Left ventricle myocardium superior (tissue), 1 donor: ENCODE measurements at regions of chr3 and their contacts with region 1.

Region 1: DNA sequence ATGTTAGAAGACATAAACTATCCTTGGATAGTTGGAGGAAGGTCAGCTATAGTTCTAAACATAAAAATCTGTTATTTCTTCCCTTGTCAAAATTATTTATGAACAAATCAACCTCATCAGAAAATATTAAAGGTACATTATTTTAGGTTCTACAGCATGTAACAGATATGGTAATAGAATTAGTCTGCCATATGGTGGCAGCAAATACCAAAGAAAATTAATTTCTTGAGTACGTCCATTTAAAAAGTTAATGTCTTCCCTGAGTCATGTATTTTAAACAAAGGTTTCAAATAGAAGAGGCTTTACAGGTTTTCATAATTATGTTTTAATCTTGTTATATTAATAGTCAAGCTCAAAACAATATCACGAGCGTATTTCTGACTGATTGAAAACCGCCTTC is 17.9 kb upstream of the ANKRD28 start:
- DNase-seq: no peak
- ATAC-seq: peak; percentile 66

Region 2: GRCh38 chr3:15629860-15630597 is 185.7 kb before region 1 on chr3:
- intact Hi-C with region 1: loop called (anchors 5 kb)
- DNase-seq: no peak
- ATAC-seq: peak; percentile 94

Region 3: DNA sequence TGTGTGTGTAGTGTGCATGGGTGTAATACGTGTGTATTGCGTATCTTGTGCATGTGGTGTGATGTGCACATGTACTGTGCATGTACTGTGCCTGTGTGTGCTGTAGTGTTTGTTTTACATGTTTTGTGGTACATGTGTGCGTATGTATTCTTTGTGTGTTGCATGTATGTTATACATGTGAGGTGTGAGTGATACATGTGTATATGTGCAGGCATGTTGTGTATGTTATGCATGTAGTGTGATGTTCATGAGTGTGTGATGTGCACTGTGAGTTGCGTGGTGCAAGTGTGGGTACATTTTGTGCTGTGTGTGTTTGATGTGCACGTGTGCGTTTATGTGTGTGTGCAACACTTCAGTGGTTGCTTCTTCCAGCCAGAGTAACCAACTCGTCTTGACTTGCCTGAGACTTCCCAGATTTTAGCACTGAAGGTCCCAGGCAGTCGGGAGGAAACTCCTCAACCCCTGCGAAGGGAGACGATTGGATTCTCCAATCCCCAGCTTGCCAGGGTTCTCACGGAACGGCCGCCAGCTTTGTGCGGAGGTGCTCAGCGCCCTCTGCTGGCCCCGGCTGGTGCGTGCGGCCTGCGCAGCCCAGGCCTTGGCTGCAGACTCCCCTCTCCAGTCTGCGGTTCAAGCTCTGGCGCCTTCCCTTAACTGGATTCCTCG is 362.4 kb after region 1 on chr3:
- intact Hi-C with region 1: loop called (anchors 10 kb)
- DNase-seq: peak; percentile 92
- ATAC-seq: peak; percentile 72